ENCODE measurements at regions of chr6 and their contacts with region 1.

Region 1: GRCh38 chr6:85436939-85437495 is 12.9 kb upstream of the NT5E start:
- DNase-seq: no peak
- H3K4me3 ChIP-seq: no peak overlapping the region
- CTCF ChIP-seq: no peak
- POLR2A ChIP-seq: no peak

Region 2: GRCh38 chr6:85449818-85450759 is 13.1 kb after region 1 on chr6 and contains the start of gene NT5E:
- intact Hi-C with region 1: loop called (anchors 1 kb)
- DNase-seq: peak; percentile 41 to 93
- H3K4me3 ChIP-seq: peak within 1 kb of the TSS; percentile 38
- CTCF ChIP-seq: no peak
- POLR2A ChIP-seq: no peak
- total RNA-seq, gene NT5E: 6.3 to 12.8 (median 9.2) TPM

Measured in lower leg skin (tissue), 4 donors.